GM10248 (cell line): ENCODE measurements at regions of chr1 and their contacts with region 1.

Region 1: DNA sequence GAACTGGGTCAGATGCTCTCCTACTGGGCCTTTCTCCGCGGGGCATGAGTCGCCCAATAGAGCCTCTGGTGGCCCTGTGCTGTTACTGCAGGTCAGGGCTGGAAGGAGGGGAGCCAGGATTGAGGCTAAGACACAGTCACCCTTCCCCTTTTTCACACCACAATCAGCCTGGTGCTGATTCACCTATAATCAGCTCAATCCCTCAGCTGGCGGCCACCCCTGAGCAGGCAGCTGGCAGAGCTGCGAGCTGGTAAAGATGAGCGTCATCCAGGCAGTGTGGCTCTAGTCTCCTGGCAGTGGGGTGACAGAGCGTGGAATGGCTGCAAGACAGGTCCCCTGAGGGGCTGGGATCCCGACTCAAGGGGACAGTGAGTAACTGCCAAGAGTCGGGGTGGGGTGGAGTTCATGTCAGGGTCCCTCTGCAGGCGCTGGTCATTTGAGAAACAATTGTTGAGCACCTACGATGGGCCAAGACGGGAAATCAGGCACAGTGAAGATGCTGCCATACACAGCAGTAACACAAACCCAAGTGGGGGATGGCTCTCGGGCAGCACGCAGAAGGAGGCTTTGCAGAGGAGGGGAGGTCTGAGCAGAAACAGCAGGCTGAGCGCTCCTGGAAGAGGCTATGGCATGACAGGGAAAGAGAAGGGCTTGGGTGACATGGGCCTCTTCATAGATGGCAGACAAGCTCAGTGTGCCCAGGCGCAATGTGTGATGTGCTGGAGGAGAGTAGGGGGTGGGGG is 21.8 kb downstream of the ATF3 start:
- DNase-seq: peak; percentile 83
- CTCF ChIP-seq: peak; percentile 89

Region 2: GRCh38 chr1:212567638-212568037 is 62.7 kb before region 1 on chr1:
- CTCF ChIA-PET with region 1: no interaction called
- POLR2A ChIA-PET with region 1: no interaction called
- DNase-seq: no peak
- CTCF ChIP-seq: no peak

Region 3: DNA sequence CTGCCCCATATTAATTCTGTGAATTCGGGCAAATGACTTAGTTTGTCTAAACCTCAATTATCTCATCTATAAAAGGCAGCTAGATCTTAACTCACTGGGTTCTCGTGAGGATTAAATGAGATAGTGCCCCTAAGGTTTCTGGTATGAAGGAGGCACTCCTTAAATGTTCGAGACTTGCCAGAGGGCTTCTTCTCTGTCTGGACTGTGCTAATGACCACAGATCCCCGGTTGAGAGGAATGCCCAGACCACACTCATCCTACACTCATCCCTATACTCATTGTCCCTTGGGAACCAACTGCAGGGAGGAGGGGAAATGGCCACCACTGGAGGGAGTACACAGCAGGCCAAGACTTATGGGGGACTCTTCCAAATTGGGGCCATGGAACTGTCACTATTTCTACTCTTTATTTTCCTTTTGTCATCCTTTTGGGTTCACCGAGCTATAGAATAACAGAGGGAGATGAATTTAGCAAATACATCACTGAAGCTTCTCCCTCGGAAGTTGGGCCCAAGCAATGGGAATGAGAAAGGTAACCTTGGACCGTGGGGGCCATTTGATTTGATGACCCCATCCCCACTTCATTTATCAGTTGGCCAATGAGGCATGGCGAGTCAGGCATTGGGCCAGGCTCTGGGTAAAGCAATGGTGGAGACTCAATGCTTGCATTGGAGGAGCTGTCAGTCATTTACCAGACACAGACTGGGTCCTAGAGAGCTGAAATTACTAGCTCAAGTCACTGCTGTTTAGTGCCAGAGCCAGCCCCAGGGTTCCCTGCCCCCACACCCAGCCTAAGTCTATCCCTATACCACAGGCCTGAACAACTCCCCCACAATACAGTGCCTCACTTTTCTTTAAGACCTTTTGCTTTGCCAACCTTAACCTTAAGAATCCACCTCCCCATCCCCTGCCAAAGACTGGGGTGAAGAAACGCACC is 16.6 kb before region 1 on chr1:
- CTCF ChIA-PET with region 1: interaction called, 38 read pairs
- POLR2A ChIA-PET with region 1: interaction called, 3 read pairs
- DNase-seq: no peak
- CTCF ChIP-seq: no peak

Region 4: GRCh38 chr1:212645546-212646543 is 15.5 kb after region 1 on chr1:
- CTCF ChIA-PET with region 1: interaction called, 24 read pairs
- POLR2A ChIA-PET with region 1: no interaction called
- DNase-seq: no peak
- CTCF ChIP-seq: no peak

Region 5: GRCh38 chr1:212655668-212656423 is 25.5 kb after region 1 on chr1:
- CTCF ChIA-PET with region 1: interaction called, 15 read pairs
- POLR2A ChIA-PET with region 1: no interaction called
- DNase-seq: no peak
- CTCF ChIP-seq: no peak